Activated CD8-positive, alpha-beta memory T cell treated with anti-CD3 and anti-CD28 coated beads, Interleukin-2, amount 10 ng/mL, durations not matched to agents 7 days and 5 days (primary cell): ENCODE measurements at regions of chr4 and their contacts with region 1.

Region 1: GRCh38 chr4:99808260-99808857 is 8.3 kb upstream of the DAPP1 start:
- DNase-seq: peak; percentile 82
- ATAC-seq: peak; percentile 90
- H3K4me3 Mint-ChIP-seq: no peak overlapping the region
- H3K27ac Mint-ChIP-seq: no peak overlapping the region
- H3K4me1 Mint-ChIP-seq: peaks cover 25% of the 10 kb centered on the region
- H3K27me3 Mint-ChIP-seq: peaks cover 8% of the 10 kb centered on the region

Region 2: DNA sequence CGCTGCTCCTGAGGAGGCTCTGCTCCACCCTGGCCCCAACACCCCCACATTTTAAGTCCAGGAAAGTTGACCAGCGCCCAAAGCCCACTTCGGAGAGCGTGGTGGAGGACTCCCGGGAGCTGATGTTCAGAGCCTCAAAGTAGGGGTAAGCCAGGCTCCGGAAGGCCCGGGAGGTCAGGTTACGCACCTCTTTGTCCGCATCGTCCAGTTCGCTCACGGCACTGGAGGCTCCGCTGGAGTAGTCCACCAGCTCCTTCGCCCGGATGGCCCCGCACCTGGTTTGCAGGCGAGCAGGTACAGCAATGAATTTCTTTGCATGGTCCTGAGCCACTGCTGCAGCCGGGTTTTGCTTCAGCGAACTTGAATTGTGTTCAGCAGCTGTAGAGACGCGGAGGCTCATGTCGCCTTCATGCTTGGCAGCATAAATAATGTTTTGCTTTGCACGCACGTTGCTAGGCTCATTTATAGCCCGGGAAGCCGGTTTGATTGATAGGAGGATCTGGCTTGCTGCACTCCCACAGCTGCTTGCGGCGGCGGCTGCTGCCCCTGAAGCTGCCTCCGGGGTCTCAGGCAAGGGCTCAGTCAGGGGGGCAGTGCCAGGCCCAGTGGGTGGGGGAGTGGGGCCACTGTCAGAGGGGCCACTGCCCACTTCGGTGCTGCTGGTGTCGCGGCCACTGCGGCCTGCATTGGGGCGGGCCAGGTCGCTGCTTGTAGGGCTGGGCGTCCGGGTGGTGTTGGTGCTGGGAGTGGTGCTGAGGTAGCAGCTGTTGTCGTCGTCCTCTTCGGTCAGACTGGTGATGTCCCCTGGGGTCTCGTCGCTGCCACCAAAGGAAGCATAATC is 155.5 kb before region 1 on chr4:
- CTCF ChIA-PET with region 1: no interaction called
- DNase-seq: no peak
- ATAC-seq: no peak
- H3K4me3 Mint-ChIP-seq: no peak overlapping the region
- H3K27ac Mint-ChIP-seq: no peak overlapping the region
- H3K4me1 Mint-ChIP-seq: no peaks in the 10 kb centered on the region
- H3K27me3 Mint-ChIP-seq: peaks cover 9% of the 10 kb centered on the region

Region 3: GRCh38 chr4:99847362-99847976 is 39.1 kb after region 1 on chr4:
- CTCF ChIA-PET with region 1: interaction called, 17 read pairs
- DNase-seq: peak; percentile 50
- ATAC-seq: peak; percentile 57
- H3K4me3 Mint-ChIP-seq: peak overlapping the region; percentile 43
- H3K27ac Mint-ChIP-seq: peak overlapping the region; percentile 97
- H3K4me1 Mint-ChIP-seq: peaks cover 73% of the 10 kb centered on the region
- H3K27me3 Mint-ChIP-seq: no peaks in the 10 kb centered on the region

Region 4: GRCh38 chr4:99879458-99879857 is 71.1 kb after region 1 on chr4:
- CTCF ChIA-PET with region 1: interaction called, 64 read pairs
- DNase-seq: no peak
- ATAC-seq: no peak
- H3K4me3 Mint-ChIP-seq: no peak overlapping the region
- H3K27ac Mint-ChIP-seq: no peak overlapping the region
- H3K4me1 Mint-ChIP-seq: no peaks in the 10 kb centered on the region
- H3K27me3 Mint-ChIP-seq: no peaks in the 10 kb centered on the region

Region 5: DNA sequence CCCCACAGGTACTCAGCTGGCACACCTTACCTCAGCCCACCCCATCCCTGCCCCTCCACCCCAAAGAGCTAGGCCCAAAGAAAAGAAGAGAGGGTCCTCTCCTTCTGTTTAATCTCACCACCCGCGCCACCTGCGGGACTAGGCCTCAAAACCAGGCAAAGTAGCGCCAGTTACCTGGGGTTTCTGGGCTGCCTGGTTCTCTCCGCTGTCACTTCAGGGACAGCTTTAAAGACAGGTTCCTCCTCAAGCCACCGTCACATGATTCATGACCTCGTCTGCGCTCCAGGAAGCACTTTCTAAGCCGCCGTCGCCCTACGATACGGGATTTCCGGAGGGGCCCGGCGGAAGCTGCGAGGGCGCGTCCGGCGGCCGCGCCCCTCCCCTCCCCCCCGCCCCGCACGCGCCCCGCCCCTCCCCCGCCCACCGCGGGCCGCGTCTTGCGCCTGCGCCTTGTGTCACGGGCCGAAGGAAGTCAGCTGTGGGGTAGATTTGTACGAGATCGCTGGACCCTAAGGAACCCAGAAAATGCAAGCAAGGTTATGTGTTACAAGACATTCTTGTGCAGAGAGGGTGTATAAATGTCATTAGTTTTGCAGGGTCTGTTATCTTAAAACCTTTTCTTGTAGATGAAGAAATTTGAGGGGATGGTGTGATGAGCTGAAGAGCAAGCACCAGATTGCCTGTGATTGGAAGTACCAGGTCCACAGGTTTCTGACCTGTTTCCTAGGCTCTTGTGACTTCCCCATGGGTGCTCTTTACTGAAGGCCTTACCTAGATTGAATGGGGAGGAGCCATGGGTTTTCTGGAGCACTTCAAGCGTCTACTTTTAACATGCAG is 86.0 kb after region 1 on chr4 and contains the start of gene LAMTOR3:
- CTCF ChIA-PET with region 1: interaction called, 11 read pairs
- DNase-seq: peak; percentile 94
- ATAC-seq: peak; percentile 99
- H3K4me3 Mint-ChIP-seq: peak within 1 kb of the TSS; percentile 88
- H3K27ac Mint-ChIP-seq: peak within 1 kb of the TSS; percentile 93
- H3K4me1 Mint-ChIP-seq: peaks cover 39% of the 10 kb centered on the region
- H3K27me3 Mint-ChIP-seq: no peaks in the 10 kb centered on the region
- total RNA-seq, gene LAMTOR3: 20.6 to 25.3 TPM

Region 6: DNA sequence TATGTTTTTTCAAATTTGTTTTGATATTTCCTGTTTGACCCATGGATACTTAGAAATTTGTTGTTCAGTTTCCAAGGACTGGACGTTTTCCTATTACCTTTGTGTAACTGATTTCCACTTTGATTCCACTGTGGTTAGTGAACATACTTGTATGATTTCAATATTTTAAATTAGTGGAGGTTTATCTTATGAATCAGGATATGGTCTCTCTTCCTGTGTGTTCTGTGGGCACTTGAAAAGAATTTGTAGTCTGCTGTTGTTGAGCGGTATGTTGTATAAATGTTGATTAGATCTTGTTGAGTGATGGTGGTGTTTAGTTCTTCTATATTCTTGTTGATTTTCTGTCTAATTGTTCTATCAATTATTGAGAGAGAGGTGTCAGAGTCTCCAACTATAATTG is 107.1 kb after region 1 on chr4:
- CTCF ChIA-PET with region 1: no interaction called
- DNase-seq: no peak
- ATAC-seq: no peak
- H3K4me3 Mint-ChIP-seq: no peak overlapping the region
- H3K27ac Mint-ChIP-seq: peak overlapping the region; percentile 10
- H3K4me1 Mint-ChIP-seq: peaks cover 10% of the 10 kb centered on the region
- H3K27me3 Mint-ChIP-seq: no peaks in the 10 kb centered on the region